Posterior cingulate gyrus (tissue), 11 donors: ENCODE measurements at regions of chrX and their contacts with region 1.

Region 1: DNA sequence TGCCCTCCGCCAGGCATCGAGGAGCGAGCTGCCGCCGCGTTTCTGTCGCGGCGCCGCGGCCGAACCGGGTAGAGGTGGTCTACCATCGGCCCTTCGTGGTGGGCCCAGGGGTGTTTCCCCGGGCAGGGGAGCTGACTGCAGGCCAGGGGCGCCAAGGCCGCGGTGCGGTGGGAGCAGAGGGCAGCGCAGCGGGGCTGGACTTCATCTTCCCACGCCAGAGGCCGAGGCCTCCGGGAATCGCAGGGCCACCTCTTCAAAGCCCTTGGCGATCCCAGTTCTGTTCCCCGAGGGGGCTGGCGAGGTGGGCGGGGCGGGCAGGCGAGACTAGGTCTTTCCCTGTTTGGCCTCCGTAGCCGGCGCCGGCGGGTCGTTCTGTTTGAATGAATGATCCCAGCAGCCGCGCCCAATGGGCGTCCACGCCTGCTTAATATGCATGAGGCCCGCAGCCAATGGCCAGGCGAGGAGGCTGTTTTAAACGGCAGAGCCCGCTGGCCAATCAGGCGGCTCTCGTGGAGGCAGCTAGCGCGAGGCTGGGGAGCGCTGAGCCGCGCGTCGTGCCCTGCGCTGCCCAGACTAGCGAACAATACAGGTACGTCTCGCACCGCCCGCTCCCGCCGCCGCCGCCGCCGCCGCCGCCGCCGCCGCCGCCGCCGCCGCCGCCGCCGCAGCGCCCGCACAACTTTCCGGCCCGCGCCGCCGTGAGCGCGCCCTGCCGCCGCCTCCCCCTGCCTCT is at the start of gene HMGB3:
- DNase-seq: peak; percentile 57 to 97 (median 82)

Region 2: DNA sequence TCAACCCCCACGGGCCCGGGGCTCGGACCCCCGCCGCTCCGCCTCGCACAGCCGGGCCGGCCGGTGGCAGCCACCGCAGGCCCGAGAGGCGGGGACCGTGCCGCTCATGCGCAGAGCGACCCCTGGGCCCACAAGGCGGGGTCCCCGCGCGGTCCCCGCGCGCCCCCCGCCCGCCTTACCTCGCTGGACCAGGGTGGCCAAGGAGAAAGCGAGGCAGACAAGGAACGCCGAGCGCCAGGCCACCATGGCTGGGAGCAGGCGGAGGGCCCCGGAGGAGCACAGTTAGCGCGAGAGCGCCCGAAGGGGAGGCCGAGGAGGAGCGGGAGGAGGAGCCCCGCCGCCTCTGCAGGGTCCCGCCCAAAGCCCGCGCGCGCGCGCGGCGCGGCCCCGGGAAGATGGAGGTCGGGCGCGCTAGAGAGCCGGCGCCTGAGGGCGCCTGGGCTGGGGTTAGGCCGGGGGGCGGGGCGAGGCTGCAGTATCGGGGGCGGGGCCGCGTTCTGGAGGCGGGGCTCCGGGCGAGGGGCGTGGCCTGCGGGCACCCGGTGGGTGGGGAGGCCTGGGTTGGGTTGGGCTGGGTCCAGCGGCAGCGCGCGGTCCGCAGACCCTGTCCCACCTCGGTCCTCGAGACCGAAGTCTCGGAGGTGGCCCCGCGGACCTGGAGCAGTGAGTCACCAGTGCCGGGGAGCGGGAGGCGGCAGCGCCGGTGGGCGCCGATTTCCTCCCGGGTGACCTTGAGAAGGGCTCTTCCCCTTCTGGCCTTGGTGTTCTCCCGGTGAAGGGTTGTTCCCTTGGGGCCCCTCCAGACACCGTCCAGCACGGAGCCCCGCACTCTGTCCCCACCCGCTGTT is 84.4 kb before region 1 on chrX and contains the start of gene CD99L2:
- intact Hi-C with region 1: loop called (anchors 10 kb)
- DNase-seq: peak; percentile 76 to 98 (median 86)